Transverse colon (tissue), 4 donors: ENCODE measurements at regions of chr2 and their contacts with region 1.

Region 1: GRCh38 chr2:191051825-191052778 is 38.1 kb upstream of the STAT1 start:
- DNase-seq: no peak
- H3K4me3 ChIP-seq: no peak overlapping the region
- H3K27ac ChIP-seq: no peak overlapping the region
- H3K4me1 ChIP-seq: peaks cover 0 to 6% (median 3%) of the 10 kb centered on the region in 4 donors
- H3K27me3 ChIP-seq: no peaks in the 10 kb centered on the region
- CTCF ChIP-seq: peak; percentile 55 to 66 (median 62)
- EP300 ChIP-seq: no peak
- POLR2A ChIP-seq: no peak

Region 2: GRCh38 chr2:190235101-190235500 is 817.0 kb before region 1 on chr2:
- in situ Hi-C with region 1: no loop called
- intact Hi-C with region 1: no loop called
- DNase-seq: no peak
- H3K4me3 ChIP-seq: no peak overlapping the region
- H3K27ac ChIP-seq: peak overlapping the region; percentile 31 to 58 (median 46)
- H3K4me1 ChIP-seq: peaks cover 0 to 21% (median 6%) of the 10 kb centered on the region in 4 donors
- H3K27me3 ChIP-seq: no peaks in the 10 kb centered on the region
- CTCF ChIP-seq: no peak
- EP300 ChIP-seq: no peak
- POLR2A ChIP-seq: no peak

Region 3: GRCh38 chr2:191150600-191151330 is 98.7 kb after region 1 on chr2 and contains the start of gene STAT4:
- in situ Hi-C with region 1: loop called (anchors 5 to 10 kb)
- intact Hi-C with region 1: no loop called
- DNase-seq: peak; percentile 81
- H3K4me3 ChIP-seq: peak within 1 kb of the TSS; percentile 22 to 67 (median 42)
- H3K27ac ChIP-seq: peak within 1 kb of the TSS; percentile 47 to 79 (median 58)
- H3K4me1 ChIP-seq: peaks cover 0 to 15% (median 3%) of the 10 kb centered on the region in 4 donors
- H3K27me3 ChIP-seq: no peaks in the 10 kb centered on the region
- CTCF ChIP-seq: no peak
- EP300 ChIP-seq: no peak
- POLR2A ChIP-seq: peak; percentile 65
- total RNA-seq, gene STAT4: 3.1 to 9.1 TPM in 2 of 4 donors, not detected in the others

Region 4: DNA sequence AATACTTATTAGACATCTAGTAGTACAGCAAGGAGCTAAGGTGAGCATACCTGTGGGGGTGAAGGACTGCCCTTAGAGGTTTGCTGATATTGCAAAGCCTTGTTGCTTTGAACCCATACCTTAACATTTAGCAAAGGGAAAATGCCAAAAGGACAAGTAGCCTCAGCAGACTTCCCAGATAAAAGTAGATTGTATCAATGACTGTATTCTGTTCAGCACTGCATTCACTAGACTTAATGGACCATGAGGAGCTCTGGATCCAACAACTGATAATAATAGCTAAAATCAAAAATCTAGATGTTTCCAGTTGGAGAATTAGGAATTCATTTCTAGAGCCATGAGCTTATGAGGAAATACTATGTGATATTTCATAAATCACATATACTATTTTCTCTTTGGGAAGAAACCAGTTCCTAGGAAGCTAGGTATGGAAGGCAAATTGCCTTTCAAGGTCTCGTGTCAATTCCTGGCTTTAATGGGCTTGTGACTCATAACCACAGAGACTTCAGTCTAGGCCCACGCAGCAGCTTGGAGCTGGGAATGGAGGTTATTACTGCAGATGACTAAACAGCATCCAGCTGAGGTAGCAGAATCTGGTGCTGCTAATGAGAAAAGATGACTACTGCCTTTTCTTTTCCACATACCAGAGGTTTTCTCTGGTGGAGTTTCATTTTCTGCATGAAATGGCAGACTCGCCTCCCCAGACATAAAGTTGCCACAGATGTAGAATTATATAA is 434.6 kb after region 1 on chr2:
- in situ Hi-C with region 1: loop called in 1 of 4 experiments (anchors 25 kb)
- intact Hi-C with region 1: no loop called
- DNase-seq: peak; percentile 11
- H3K4me3 ChIP-seq: no peak overlapping the region
- H3K27ac ChIP-seq: no peak overlapping the region
- H3K4me1 ChIP-seq: peaks cover 0 to 9% (median 0%) of the 10 kb centered on the region in 4 donors
- H3K27me3 ChIP-seq: no peaks in the 10 kb centered on the region
- CTCF ChIP-seq: no peak
- EP300 ChIP-seq: no peak
- POLR2A ChIP-seq: no peak

Region 5: GRCh38 chr2:191521608-191522208 is 469.6 kb after region 1 on chr2:
- in situ Hi-C with region 1: loop called in 2 of 4 experiments (anchors 10 to 25 kb)
- intact Hi-C with region 1: no loop called
- DNase-seq: no peak
- H3K4me3 ChIP-seq: no peak overlapping the region
- H3K27ac ChIP-seq: no peak overlapping the region
- H3K4me1 ChIP-seq: no peaks in the 10 kb centered on the region
- H3K27me3 ChIP-seq: no peaks in the 10 kb centered on the region
- CTCF ChIP-seq: peak; percentile 71 to 77 (median 76)
- EP300 ChIP-seq: no peak
- POLR2A ChIP-seq: no peak